ENCODE measurements at regions of chr19 and their contacts with region 1.

Region 1: GRCh38 chr19:54029930-54030490 is 33.7 kb downstream of the VSTM1 start:
- DNase-seq: peak; percentile 62
- H3K4me3 ChIP-seq: no peak overlapping the region
- H3K27ac ChIP-seq: no peak overlapping the region
- H3K4me1 ChIP-seq: no peaks in the 10 kb centered on the region
- H3K27me3 ChIP-seq: no peaks in the 10 kb centered on the region
- CTCF ChIP-seq: peak; percentile 39

Region 2: GRCh38 chr19:53808710-53809125 is 221.3 kb before region 1 on chr19:
- intact Hi-C with region 1: loop called (anchors 10 kb)
- DNase-seq: no peak
- H3K4me3 ChIP-seq: no peak overlapping the region
- H3K27ac ChIP-seq: no peak overlapping the region
- H3K4me1 ChIP-seq: no peaks in the 10 kb centered on the region
- H3K27me3 ChIP-seq: no peaks in the 10 kb centered on the region
- CTCF ChIP-seq: peak; percentile 21

Region 3: GRCh38 chr19:53908106-53908934 is 121.7 kb before region 1 on chr19:
- intact Hi-C with region 1: no loop called
- DNase-seq: peak; percentile 32
- H3K4me3 ChIP-seq: no peak overlapping the region
- H3K27ac ChIP-seq: no peak overlapping the region
- H3K4me1 ChIP-seq: no peaks in the 10 kb centered on the region
- H3K27me3 ChIP-seq: peaks cover 36% of the 10 kb centered on the region
- CTCF ChIP-seq: no peak

Region 4: GRCh38 chr19:54062643-54063042 is 32.6 kb after region 1 on chr19:
- intact Hi-C with region 1: no loop called
- DNase-seq: no peak
- H3K4me3 ChIP-seq: no peak overlapping the region
- H3K27ac ChIP-seq: no peak overlapping the region
- H3K4me1 ChIP-seq: no peaks in the 10 kb centered on the region
- H3K27me3 ChIP-seq: no peaks in the 10 kb centered on the region
- CTCF ChIP-seq: no peak

Region 5: DNA sequence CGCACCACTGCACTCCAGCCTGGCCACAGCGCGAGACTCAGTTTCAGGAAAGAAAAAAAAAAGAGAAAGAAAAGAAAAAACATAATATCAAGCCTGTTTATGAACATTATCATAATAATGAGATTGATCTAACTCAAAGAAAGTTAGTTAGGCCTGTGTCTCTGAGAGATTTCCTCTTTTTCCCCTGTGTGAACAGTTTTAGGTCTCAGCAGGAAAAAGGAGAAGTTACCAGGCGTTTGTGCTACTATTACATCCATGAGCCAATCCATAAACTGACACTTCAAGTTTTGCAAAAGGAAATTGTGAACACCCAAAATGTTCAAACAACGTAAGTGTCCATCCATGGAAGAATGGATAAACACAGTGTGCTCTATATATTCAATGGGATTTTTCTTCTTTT is 47.3 kb after region 1 on chr19:
- intact Hi-C with region 1: no loop called
- DNase-seq: no peak
- H3K4me3 ChIP-seq: no peak overlapping the region
- H3K27ac ChIP-seq: no peak overlapping the region
- H3K4me1 ChIP-seq: no peaks in the 10 kb centered on the region
- H3K27me3 ChIP-seq: no peaks in the 10 kb centered on the region
- CTCF ChIP-seq: no peak

Region 6: DNA sequence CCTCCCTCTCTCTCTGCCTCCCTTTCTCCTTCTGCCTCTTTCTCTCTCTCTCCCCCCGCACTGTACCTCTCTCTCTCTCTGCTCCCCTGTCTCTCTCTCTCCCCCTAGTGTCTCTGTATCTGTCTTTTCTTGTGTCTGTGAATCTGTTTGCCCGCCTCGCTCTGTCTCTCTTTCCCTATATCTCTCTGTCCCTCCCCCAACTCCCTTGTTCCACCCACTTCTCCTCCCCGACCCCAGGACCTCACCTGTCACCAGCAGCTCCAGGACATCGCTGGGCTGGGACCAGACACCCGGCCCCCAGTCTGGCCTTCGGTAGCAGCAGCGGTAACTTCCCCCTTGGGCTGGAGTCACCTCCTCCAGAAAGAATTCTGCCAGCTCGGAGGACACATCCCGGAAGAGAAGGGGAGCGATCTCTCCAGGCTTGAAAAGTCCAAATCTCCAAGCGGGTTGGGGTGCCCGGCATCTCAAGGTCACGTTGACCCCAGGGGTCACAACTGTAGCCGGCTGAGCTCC is 66.7 kb after region 1 on chr19:
- intact Hi-C with region 1: no loop called
- DNase-seq: no peak
- H3K4me3 ChIP-seq: peak overlapping the region; percentile 10
- H3K27ac ChIP-seq: peak overlapping the region; percentile 8
- H3K4me1 ChIP-seq: no peaks in the 10 kb centered on the region
- H3K27me3 ChIP-seq: no peaks in the 10 kb centered on the region
- CTCF ChIP-seq: no peak

Measured in colonic mucosa (tissue), 4 donors.